ENCODE measurements at regions of chr3 and their contacts with region 1.

Region 1: DNA sequence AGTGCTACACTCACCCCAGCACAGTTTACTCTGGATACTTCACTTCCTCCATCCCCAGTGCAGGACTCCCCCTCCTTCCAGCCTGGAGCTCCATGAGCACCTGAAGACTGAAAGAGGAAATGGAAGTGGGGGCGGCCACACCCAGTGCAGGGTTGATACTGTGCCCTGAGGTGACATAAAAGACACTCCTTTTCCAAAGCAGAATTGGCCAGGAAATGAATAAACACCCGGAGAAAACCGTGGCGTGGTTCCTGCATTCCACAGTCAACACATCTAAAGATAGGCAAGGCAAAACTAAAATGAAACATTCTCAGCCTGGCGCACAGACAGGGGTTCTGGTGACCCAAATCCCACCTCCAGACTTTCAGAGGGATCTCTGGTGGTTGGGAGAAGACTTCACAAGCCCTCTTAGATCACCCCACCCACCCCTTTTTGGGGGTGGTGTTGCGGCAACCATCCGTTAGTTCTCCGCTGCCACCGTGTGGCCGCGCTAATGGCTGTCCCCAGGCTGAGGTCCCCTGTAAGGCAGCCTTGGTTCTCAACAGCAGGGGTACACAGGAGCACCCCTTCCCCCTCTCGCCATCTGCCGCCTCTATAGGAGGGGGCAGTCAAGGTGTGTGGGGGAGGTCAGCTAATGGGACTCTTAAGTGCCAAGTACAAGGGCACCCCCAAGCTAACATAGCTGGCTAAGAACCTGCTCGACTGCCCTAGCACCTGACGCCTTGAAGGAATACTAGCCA is 2.5 kb upstream of the MST1R start:
- DNase-seq: peak in 3 of 7 donors; percentile 27 to 44 (median 44)
- H3K4me3 ChIP-seq: peak overlapping the region in 1 of 4 donors; percentile 41
- H3K27ac ChIP-seq: peak overlapping the region in 1 of 5 donors; percentile 10
- H3K4me1 ChIP-seq: no peaks in the 10 kb centered on the region
- H3K27me3 ChIP-seq: no peaks in the 10 kb centered on the region
- CTCF ChIP-seq: peak; percentile 28 to 66 (median 60)
- POLR2A ChIP-seq: no peak

Region 2: DNA sequence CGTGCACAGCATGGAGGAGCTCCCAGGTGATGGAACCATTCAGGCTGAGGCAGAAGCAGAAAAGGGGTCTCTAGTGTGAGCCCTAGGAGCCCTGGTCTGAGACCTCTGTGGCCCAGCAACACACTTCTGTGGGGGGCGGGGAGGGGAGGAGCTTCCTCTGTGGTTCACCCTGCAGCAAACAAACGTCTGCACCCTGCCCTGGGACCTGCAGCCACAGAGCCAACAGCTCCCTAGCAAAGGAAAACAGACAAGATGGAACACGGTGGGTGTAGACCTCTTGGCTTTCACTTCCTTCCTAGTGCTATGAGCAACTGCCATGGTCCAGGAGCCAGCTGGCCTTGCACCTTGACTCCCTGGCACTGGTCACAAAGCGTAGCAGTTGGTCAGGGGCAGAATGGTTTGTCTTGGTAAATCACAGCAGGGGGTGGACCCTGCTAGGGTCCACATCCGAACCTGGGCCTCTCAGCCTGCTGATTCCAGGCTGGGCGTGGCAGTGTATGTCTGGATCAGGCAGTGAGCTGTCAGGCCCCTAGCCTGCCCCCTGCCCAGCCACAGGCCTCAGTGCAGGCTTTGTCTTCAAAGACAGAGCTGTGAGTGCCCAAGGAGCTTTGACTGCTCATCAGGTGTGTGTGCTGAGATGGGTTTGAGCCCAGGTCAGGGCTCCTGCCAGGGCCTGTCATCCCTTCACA is 193.4 kb before region 1 on chr3:
- intact Hi-C with region 1: loop called in 1 of 2 experiments (anchors 5 kb)
- DNase-seq: peak in 1 of 7 donors; percentile 3
- H3K4me3 ChIP-seq: no peak overlapping the region
- H3K27ac ChIP-seq: no peak overlapping the region
- H3K4me1 ChIP-seq: no peaks in the 10 kb centered on the region
- H3K27me3 ChIP-seq: no peaks in the 10 kb centered on the region
- CTCF ChIP-seq: no peak
- POLR2A ChIP-seq: no peak

Region 3: DNA sequence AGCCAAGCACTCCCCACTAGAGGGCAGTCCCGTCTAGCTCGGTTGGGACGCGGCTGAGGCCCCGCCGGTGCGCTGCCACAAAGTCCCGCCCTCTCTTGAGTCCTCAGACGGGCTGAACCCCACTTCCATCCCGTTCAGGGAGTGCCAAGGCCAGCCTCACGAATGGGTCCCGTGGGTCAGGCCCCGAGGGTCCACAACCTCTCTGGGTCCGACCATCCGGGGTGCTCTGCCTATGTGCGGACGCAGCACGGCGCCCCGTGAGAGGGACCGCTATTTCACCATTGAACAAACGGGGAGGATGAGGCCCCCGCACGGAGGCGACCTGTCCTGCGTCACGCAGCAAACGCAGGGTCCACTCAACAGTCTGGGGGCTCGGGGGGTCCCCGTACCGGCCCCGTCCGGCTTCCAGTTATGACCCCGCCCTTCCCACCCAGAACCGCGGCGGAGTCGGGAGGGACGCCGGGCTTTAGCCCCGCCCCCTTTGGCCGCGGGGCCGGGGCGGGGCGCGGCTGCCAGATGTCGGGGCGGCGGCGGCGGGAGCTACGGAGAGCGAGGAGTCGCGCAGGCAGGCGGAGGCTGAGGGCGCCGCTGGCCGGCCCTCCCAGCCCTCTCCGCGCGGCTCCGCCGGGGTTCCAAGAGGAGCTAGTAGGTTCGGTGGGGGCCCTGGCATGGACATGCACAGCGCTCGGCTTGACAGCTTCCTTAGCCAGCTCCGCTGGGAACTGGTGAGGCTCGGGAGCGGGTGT is 103.3 kb before region 1 on chr3 and contains the start of gene INKA1:
- intact Hi-C with region 1: loop called (anchors 2 to 10 kb)
- DNase-seq: peak; percentile 80 to 94 (median 91)
- H3K4me3 ChIP-seq: peak within 1 kb of the TSS; percentile 66 to 83 (median 76)
- H3K27ac ChIP-seq: peak within 1 kb of the TSS in 4 of 5 donors; percentile 61 to 87 (median 78)
- H3K4me1 ChIP-seq: peaks cover 7 to 44% of the 10 kb centered on the region in 2 donors
- H3K27me3 ChIP-seq: no peaks in the 10 kb centered on the region
- CTCF ChIP-seq: peak; percentile 74 to 95 (median 88)
- POLR2A ChIP-seq: peak; percentile 35 to 45
- total RNA-seq, gene INKA1: 1.8 to 5.5 (median 3.1) TPM